ENCODE measurements at regions of chr7 and their contacts with region 1.

Region 1: DNA sequence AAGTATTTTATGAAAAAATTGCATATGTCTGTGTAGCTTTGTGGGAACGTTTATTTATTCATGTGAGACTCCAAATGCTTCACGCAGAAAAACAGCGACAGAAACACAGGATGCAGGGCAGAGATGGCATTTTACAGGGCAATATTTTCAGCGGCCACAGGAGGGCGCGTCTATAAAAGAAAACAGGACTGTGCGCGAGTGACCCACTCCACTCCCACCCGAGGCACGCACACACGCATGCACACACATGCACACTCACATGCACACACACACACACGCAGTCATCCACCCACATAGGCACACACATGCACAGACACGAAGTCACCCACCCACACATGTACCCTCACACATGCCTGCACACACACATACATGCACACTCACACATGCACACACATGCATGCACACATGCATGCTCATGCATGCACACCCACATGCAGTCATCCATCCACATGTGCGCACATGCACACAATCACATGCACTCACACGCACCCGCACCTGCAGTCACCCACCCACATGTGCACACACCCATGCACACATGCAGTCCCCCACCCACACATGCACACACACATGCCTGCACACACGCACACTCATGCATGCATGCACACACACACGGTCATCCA is 96.3 kb downstream of the DNAJB6 start:
- DNase-seq: peak in 2 of 5 donors; percentile 30 to 41
- ATAC-seq: peak in 2 of 4 donors; percentile 40 to 60
- H3K4me3 ChIP-seq: peak overlapping the region in 8 of 12 donors; percentile 16 to 40 (median 28)
- H3K27ac ChIP-seq: no peak overlapping the region
- H3K4me1 ChIP-seq: peaks cover 0 to 11% (median 7%) of the 10 kb centered on the region in 12 donors
- H3K27me3 ChIP-seq: no peaks in the 10 kb centered on the region
- CTCF ChIP-seq: peak; percentile 50 to 76 (median 64)
- POLR2A ChIP-seq: no peak

Region 2: GRCh38 chr7:157684157-157684908 is 251.3 kb after region 1 on chr7:
- intact Hi-C with region 1: loop called in 1 of 10 experiments (anchors 10 kb)
- DNase-seq: no peak
- ATAC-seq: peak in 1 of 4 donors; percentile 43
- H3K4me3 ChIP-seq: peak overlapping the region in 9 of 12 donors; percentile 11 to 46 (median 32)
- H3K27ac ChIP-seq: no peak overlapping the region
- H3K4me1 ChIP-seq: peaks cover 0 to 39% (median 12%) of the 10 kb centered on the region in 12 donors
- H3K27me3 ChIP-seq: peaks cover 49 to 100% (median 81%) of the 10 kb centered on the region in 9 donors
- CTCF ChIP-seq: no peak
- POLR2A ChIP-seq: no peak

Region 3: GRCh38 chr7:157875230-157876179 is 442.4 kb after region 1 on chr7:
- intact Hi-C with region 1: loop called in 9 of 10 experiments (anchors 5 to 10 kb)
- DNase-seq: peak in 2 of 5 donors; percentile 43 to 51
- ATAC-seq: peak in 3 of 4 donors; percentile 55 to 72 (median 58)
- H3K4me3 ChIP-seq: no peak overlapping the region
- H3K27ac ChIP-seq: no peak overlapping the region
- H3K4me1 ChIP-seq: peaks cover 0 to 9% (median 5%) of the 10 kb centered on the region in 12 donors
- H3K27me3 ChIP-seq: peaks cover 0 to 27% (median 4%) of the 10 kb centered on the region in 9 donors
- CTCF ChIP-seq: peak; percentile 51 to 69 (median 60)
- POLR2A ChIP-seq: no peak

Region 4: GRCh38 chr7:158407581-158408317 is 974.7 kb after region 1 on chr7:
- intact Hi-C with region 1: loop called in 5 of 10 experiments (anchors 5 to 10 kb)
- DNase-seq: no peak
- ATAC-seq: peak in 1 of 4 donors; percentile 39
- H3K4me3 ChIP-seq: no peak overlapping the region
- H3K27ac ChIP-seq: no peak overlapping the region
- H3K4me1 ChIP-seq: no peaks in the 10 kb centered on the region
- H3K27me3 ChIP-seq: peaks cover 0 to 27% (median 0%) of the 10 kb centered on the region in 9 donors
- CTCF ChIP-seq: peak in 10 of 12 donors; percentile 24 to 58 (median 44)
- POLR2A ChIP-seq: no peak